ENCODE measurements at regions of chr1 and their contacts with region 1.

Region 1: GRCh38 chr1:206635080-206635977 is at the start of gene DYRK3:
- DNase-seq: peak; percentile 97
- ATAC-seq: peak; percentile 99
- total RNA-seq, gene DYRK3: 12.4 to 18.7 TPM

Region 2: GRCh38 chr1:206663832-206664652 is 28.7 kb after region 1 on chr1:
- intact Hi-C with region 1: loop called in 1 of 2 experiments (anchors 1 kb)
- DNase-seq: peak; percentile 63
- ATAC-seq: peak; percentile 75 to 77

Region 3: GRCh38 chr1:206734499-206735142 is 99.3 kb after region 1 on chr1:
- intact Hi-C with region 1: loop called in 1 of 2 experiments (anchors 5 kb)
- DNase-seq: peak; percentile 47
- ATAC-seq: peak; percentile 21 to 24

Region 4: GRCh38 chr1:206803221-206803730 is 167.9 kb after region 1 on chr1:
- intact Hi-C with region 1: loop called (anchors 2 to 5 kb)
- DNase-seq: no peak
- ATAC-seq: peak; percentile 51 to 91

Region 5: DNA sequence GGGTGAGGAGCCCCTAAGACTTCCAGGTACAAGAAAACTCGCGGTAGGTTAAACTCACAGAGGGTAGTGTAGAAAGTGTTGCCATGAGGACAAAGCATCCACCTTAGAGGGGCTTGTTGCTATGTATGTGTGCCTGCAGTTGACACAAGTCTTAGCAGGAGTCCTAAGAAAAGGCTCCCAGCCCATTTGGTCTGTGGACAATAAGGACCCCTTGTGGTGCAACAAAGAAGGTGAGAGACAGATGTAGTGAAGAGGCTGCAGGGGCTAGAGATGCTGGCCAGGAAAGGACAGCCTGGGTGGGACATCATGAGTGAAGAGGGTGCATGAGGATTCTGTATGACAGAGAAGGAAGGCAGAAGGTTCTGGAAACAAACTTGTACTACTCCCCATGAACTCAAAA is 173.3 kb after region 1 on chr1:
- intact Hi-C with region 1: loop called (anchors 2 to 5 kb)
- DNase-seq: no peak
- ATAC-seq: peak; percentile 44 to 70

Region 6: GRCh38 chr1:206912445-206913095 is 277.2 kb after region 1 on chr1:
- intact Hi-C with region 1: loop called in 1 of 2 experiments (anchors 5 kb)
- DNase-seq: peak; percentile 53
- ATAC-seq: peak; percentile 51 to 70

Region 7: DNA sequence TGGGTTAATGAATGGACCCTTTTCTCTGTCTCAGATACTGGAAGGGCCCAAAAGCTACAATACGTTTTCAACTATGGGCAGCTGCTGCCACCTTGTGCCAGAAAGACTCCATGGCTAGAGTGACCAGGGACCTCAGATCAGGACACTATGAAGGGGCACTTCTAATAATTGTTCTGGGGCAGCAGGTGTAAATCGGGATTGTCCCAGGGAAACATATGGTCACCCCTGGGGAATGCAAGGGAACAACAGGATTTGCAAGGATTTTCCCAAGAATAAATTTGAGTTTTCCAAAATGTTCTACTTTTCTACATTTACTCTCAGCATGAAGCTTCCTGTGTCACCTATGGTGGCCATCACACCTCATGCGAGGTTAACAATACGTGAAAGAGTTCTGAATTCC is 346.9 kb after region 1 on chr1:
- intact Hi-C with region 1: loop called in 1 of 2 experiments (anchors 5 kb)
- DNase-seq: peak; percentile 35
- ATAC-seq: peak; percentile 63 to 86